Tibial artery (tissue), 4 donors: ENCODE measurements at regions of chr7 and their contacts with region 1.

Region 1: GRCh38 chr7:108497082-108497725 is 28.7 kb downstream of the PNPLA8 start:
- DNase-seq: peak in 1 of 2 donors; percentile 41
- H3K4me3 ChIP-seq: no peak overlapping the region
- H3K27ac ChIP-seq: no peak overlapping the region
- H3K4me1 ChIP-seq: no peaks in the 10 kb centered on the region
- H3K27me3 ChIP-seq: no peaks in the 10 kb centered on the region
- CTCF ChIP-seq: peak; percentile 70 to 79

Region 2: GRCh38 chr7:108181073-108181985 is 315.9 kb before region 1 on chr7:
- intact Hi-C with region 1: loop called (anchors 5 kb)
- DNase-seq: no peak
- H3K4me3 ChIP-seq: no peak overlapping the region
- H3K27ac ChIP-seq: no peak overlapping the region
- H3K4me1 ChIP-seq: no peaks in the 10 kb centered on the region
- H3K27me3 ChIP-seq: no peaks in the 10 kb centered on the region
- CTCF ChIP-seq: peak; percentile 45 to 63

Region 3: DNA sequence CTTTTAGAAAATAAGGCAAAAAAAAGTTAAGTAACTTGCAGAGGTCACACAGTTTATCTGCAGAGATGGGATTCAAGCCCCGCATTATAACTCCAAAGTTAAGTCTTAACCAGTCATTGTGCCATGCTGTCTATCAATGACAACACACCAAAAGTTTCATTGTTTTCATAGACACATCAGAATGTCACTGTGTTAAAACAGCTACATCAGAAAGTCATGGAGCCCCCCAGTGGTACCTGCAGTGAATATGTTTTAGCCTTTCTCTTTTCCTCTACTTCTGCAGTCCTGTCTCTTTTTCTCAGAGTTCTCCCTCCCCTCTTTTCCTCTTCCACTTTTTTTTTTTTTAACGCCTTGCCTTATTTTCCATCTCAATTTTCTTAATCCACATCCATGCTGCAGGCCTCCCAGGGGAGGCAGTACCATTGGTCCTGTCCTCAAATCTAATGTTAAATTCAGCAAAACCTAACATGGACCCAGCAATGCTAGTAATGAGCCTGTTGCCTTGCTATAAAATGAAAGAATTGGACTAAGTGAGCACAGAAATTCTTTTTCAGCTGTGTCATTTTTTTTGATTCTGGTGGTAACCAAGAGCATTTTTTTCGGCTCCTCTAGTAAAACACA is 37.2 kb before region 1 on chr7:
- intact Hi-C with region 1: no loop called
- DNase-seq: no peak
- H3K4me3 ChIP-seq: no peak overlapping the region
- H3K27ac ChIP-seq: no peak overlapping the region
- H3K4me1 ChIP-seq: peaks cover 0 to 19% (median 16%) of the 10 kb centered on the region in 4 donors
- H3K27me3 ChIP-seq: peaks cover 0 to 34% of the 10 kb centered on the region in 2 donors
- CTCF ChIP-seq: no peak